Activated CD4-positive, alpha-beta memory T cell treated with anti-CD3 and anti-CD28 coated beads, Interleukin-2, amount 10 ng/mL, durations not matched to agents 7 days and 5 days (primary cell): ENCODE measurements at regions of chr17 and their contacts with region 1.

Region 1: GRCh38 chr17:41322094-41322902 is 6.8 kb upstream of the KRTAP17-1 start:
- DNase-seq: no peak
- H3K4me3 Mint-ChIP-seq: no peak overlapping the region
- H3K27ac Mint-ChIP-seq: no peak overlapping the region
- H3K4me1 Mint-ChIP-seq: peaks cover 14% of the 10 kb centered on the region
- H3K27me3 Mint-ChIP-seq: peaks cover 4% of the 10 kb centered on the region

Region 2: DNA sequence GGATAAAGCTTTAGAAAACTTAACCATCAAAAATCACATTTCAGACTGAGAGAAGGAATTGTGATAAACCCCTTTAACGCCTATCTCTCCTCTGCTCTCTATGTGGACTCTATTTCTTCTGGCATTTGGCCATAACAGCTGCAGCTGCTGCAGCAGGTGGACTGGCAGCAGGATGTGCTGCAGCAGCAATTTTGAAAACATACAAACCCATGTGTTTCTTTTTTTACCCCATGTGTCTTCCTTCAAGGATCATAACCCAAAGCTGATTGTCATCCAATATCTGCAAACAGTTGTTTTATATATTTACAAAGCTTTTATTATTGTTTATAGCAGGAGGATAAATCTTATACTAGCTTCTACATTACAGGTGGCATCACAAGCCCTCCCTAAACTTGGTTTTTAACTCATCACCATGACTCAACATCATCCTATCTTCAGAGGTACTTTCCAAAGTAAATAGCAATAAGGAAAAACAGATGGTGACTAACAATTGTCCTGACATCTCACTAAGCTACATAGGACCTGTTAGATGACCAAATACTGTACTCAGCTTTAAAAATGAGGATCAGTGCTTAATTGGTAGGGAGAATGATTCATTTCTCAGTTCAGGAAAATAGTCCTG is 110.3 kb before region 1 on chr17:
- CTCF ChIA-PET with region 1: no interaction called
- POLR2A ChIA-PET with region 1: no interaction called
- DNase-seq: no peak
- H3K4me3 Mint-ChIP-seq: no peak overlapping the region
- H3K27ac Mint-ChIP-seq: no peak overlapping the region
- H3K4me1 Mint-ChIP-seq: no peaks in the 10 kb centered on the region
- H3K27me3 Mint-ChIP-seq: peaks cover 27% of the 10 kb centered on the region

Region 3: GRCh38 chr17:41223821-41224220 is 98.5 kb before region 1 on chr17:
- CTCF ChIA-PET with region 1: no interaction called
- POLR2A ChIA-PET with region 1: no interaction called
- DNase-seq: no peak
- H3K4me3 Mint-ChIP-seq: no peak overlapping the region
- H3K27ac Mint-ChIP-seq: no peak overlapping the region
- H3K4me1 Mint-ChIP-seq: no peaks in the 10 kb centered on the region
- H3K27me3 Mint-ChIP-seq: peaks cover 9% of the 10 kb centered on the region

Region 4: DNA sequence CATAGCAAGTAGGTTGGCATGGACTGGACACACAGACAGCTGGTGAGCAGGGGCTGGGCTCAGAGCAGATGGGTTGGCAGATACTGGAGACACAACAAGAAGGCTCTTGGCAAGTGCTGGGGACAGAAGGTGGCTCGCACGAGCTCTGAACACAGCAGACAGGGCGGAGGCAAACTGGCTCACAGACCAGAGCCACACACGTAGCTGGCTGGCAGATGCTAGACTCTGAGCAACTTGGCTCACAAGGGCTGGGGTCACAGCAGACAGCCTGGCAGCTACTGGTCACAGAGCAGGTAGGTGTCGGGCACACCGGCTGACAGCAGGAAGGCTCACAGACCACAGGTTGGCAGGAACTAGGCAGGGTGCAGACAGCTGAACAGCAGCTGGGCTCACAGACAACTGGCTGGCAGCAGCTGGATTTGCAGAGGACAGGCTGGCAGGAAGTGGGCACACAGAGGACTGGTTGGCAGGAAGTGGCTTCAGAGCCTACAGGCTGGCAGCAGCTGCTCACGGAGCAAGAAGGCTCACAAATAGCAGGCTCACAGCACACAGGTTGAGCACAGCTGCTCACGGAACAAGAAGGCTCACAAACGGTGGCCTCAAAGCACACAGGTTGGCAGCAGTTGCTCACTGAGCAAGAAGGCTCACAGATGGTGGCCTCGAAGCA is 13.9 kb before region 1 on chr17:
- CTCF ChIA-PET with region 1: interaction called, 21 read pairs
- POLR2A ChIA-PET with region 1: no interaction called
- DNase-seq: peak; percentile 84
- H3K4me3 Mint-ChIP-seq: peak overlapping the region; percentile 58
- H3K27ac Mint-ChIP-seq: peak overlapping the region; percentile 92
- H3K4me1 Mint-ChIP-seq: peaks cover 44% of the 10 kb centered on the region
- H3K27me3 Mint-ChIP-seq: peaks cover 4% of the 10 kb centered on the region

Region 5: DNA sequence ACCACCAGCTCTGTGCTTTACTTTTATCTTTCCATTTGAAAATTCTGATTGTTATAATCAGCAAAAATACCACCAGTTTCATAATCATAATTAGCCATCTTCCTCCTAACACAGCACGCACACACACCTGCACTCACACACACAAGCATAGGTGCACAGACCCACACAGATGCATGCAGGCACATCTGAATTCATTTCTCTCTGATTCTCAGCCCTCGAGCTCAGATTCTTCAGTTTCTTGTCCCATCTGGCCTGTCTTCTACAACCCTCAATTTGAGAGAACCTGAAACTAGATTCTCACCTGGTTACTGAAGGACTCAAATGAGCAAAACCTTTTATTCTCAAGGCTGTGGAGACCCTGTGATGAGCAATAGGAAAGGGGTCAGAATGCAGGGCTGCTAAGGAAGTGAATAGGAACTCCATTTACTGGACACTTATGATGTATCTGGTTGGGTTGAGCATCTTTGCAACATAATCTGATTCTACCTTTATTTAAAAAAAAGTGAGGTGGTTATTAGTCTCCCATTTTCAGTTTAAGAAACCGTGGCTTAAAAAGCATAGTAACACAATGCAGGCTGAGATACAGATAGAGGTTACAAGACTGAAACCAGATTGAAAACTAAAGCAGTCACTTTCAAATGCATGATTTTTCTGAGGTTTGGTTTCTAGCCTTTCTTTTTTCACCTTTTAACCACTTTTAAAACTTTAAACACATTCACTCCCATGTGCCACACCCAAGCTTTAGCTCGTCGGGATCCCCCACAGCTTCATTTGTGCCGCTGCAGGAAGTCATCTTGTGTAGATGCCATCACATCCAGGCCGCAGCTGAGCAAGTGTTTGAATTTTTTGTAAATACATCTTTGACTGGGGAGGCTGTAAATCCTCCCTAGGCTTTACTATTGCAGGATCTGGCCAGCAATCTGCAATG is 18.9 kb after region 1 on chr17:
- CTCF ChIA-PET with region 1: interaction called, 14 read pairs
- POLR2A ChIA-PET with region 1: no interaction called
- DNase-seq: peak; percentile 70
- H3K4me3 Mint-ChIP-seq: peak overlapping the region; percentile 8
- H3K27ac Mint-ChIP-seq: peak overlapping the region; percentile 86
- H3K4me1 Mint-ChIP-seq: peaks cover 49% of the 10 kb centered on the region
- H3K27me3 Mint-ChIP-seq: peaks cover 18% of the 10 kb centered on the region